Heart left ventricle (tissue), 16 donors: ENCODE measurements at regions of chr6 and their contacts with region 1.

Region 1: DNA sequence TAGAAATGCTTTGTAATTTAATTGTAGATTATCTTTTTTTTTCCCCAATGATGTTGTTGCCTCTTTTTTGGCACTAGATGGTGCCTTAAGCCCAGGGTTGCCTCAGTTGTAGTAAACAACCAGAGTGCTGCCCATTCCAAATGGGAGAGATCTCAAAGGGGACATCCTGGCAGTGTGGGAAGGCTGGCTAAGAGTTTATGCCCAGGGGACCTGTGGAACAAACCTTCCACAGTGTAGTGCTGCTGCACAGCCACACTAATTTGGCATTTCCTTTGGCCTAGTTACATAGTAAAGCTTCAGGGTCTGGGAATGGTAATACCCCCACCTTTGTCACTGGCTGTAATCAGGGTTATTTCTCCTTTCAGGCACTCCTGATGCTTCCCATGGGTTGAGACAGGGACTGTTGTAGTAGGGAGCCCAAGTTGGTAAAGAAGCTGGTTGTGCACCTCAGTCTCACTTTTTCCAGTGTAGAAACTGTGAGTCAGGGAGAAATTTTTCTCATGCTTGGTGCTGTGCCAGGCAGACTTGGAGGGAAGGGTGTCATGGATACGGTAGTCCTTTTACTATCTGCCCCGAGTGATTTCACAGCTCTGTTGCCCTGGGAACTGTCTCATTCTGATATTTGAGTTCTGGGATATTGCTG is 177.8 kb upstream of the ECI2 start:
- DNase-seq: peak in 3 of 5 donors; percentile 40 to 69 (median 44)
- ATAC-seq: peak; percentile 33 to 75 (median 56)
- H3K4me3 ChIP-seq: no peak overlapping the region
- H3K27ac ChIP-seq: peak overlapping the region in 9 of 12 donors; percentile 8 to 73 (median 39)
- H3K4me1 ChIP-seq: peaks cover 0 to 29% (median 20%) of the 10 kb centered on the region in 12 donors
- H3K27me3 ChIP-seq: no peaks in the 10 kb centered on the region
- CTCF ChIP-seq: peak in 11 of 12 donors; percentile 12 to 60 (median 50)
- POLR2A ChIP-seq: no peak

Region 2: DNA sequence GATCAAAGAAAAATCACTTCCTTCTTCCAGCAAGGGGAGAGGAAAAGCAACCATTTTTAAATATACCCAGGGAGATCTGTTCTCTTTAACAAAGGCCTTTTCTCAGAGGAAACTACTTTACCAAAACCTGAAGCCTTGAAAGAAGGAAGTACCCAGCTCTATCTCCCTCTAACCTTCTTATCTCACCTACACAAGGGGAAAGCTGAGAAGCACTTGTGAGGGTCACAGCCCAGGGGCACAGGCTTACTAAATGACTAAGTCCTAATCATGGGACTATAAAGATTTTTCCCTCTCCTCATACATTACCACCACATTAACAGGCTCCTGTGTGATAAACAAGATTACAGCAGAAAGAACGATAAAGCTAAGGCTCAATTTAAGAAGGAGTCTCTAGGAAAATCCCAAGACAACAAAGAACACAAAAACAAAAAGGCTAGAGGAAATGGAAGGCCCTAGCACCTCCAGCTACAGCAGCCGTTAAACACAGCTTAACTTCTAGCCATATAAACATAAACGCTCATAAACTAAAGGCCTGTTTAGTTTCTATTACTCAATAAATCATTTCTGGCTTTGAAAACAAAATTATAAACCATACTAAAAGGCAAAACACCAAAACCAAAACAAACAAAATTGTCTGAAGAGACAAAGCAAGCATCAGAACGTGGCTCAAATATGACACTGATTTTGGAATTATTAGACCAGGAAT is 107.1 kb after region 1 on chr6:
- intact Hi-C with region 1: no loop called
- DNase-seq: no peak
- ATAC-seq: no peak
- H3K4me3 ChIP-seq: no peak overlapping the region
- H3K27ac ChIP-seq: no peak overlapping the region
- H3K4me1 ChIP-seq: no peaks in the 10 kb centered on the region
- H3K27me3 ChIP-seq: no peaks in the 10 kb centered on the region
- CTCF ChIP-seq: no peak
- POLR2A ChIP-seq: no peak

Region 3: DNA sequence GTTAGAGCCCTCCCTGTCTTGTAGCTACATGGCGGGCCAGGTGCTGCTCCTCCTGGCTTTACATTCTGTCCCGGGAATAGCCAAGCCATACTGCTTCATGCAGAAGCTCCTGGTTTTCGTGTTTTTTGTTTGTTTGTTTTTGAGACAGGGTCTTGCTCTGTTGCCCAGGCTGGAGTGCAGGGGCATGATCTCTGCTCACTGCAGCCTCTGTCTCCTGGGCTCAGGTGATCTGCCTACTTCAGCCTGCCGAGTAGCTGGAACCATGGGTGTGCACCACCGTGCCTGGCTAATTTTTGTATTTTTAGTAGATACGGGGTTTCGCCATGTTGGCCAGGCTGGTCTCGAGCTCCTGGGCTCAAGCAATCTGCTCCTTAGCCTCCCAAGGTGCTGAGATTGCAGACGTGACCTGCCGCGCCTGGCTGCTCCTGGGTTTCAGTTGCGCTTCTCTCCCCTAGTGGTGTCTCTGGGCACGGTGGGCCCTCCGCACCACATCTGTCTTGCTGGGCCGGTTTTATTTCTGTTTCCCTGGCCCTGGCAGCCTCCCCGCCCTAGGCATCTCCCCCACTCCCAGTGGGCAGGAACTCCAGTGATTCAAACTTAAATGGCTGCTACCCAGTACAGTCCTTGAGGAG is 475.9 kb after region 1 on chr6:
- intact Hi-C with region 1: loop called in 1 of 10 experiments (anchors 10 kb)
- DNase-seq: no peak
- ATAC-seq: no peak
- H3K4me3 ChIP-seq: no peak overlapping the region
- H3K27ac ChIP-seq: no peak overlapping the region
- H3K4me1 ChIP-seq: peaks cover 0 to 42% (median 8%) of the 10 kb centered on the region in 12 donors
- H3K27me3 ChIP-seq: no peaks in the 10 kb centered on the region
- CTCF ChIP-seq: no peak
- POLR2A ChIP-seq: no peak

Region 4: GRCh38 chr6:4936681-4937041 is 623.5 kb after region 1 on chr6:
- intact Hi-C with region 1: loop called in 9 of 10 experiments (anchors 1 to 10 kb)
- DNase-seq: no peak
- ATAC-seq: peak in 2 of 4 donors; percentile 33 to 52
- H3K4me3 ChIP-seq: no peak overlapping the region
- H3K27ac ChIP-seq: no peak overlapping the region
- H3K4me1 ChIP-seq: peaks cover 0 to 33% (median 14%) of the 10 kb centered on the region in 12 donors
- H3K27me3 ChIP-seq: no peaks in the 10 kb centered on the region
- CTCF ChIP-seq: peak; percentile 45 to 78 (median 65)
- POLR2A ChIP-seq: no peak

Region 5: GRCh38 chr6:5030596-5031136 is 717.5 kb after region 1 on chr6:
- intact Hi-C with region 1: loop called in 2 of 10 experiments (anchors 5 kb)
- DNase-seq: peak; percentile 70 to 83 (median 75)
- ATAC-seq: peak in 3 of 4 donors; percentile 72 to 75 (median 72)
- H3K4me3 ChIP-seq: no peak overlapping the region
- H3K27ac ChIP-seq: no peak overlapping the region
- H3K4me1 ChIP-seq: peaks cover 0 to 24% (median 2%) of the 10 kb centered on the region in 12 donors
- H3K27me3 ChIP-seq: no peaks in the 10 kb centered on the region
- CTCF ChIP-seq: peak; percentile 39 to 76 (median 60)
- POLR2A ChIP-seq: no peak